Ascending aorta (tissue), 2 donors: ENCODE measurements at regions of chr19 and their contacts with region 1.

Region 1: DNA sequence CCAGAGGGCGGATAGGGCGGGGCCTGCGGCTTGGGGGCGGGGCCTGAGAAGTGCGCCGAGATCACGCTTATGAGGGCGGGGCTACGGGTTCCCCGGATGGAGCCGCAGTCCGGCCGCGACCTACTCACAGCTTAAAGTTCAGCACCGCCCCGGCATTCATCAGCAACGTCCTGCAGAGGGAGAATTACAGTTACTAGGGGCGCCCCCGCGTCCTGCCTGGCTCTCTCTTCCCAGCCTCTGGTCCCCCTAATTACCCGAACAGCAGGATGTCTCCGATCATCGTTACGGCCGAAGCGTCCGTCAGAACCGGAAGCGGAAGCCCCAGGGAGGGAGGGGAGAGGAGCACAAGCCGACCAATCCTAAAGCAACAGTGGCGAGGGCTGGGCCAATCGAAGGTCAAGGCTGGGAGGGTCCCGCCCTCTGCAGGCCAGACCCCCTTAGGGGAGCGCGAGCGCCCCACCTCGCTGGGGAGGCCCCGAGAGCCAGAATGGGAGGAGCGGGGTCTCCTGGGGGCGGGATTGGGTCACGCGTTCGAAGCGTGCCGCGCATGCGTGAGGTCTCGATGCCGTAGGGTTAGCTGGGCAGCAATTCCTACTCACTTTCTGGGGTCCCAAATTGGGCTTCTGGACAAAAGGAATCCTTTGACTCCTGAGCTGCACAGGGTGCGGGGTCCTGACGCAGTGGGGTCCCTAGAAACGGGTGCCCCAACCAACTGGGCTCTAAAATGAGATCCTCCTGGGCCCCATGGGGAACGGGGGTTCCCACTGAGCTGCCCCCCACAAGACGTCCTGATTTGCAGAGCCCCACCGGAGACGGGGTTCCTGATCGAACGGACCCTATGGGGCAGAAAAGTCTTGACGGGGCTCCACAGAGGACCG is at the start of gene SMIM7:
- DNase-seq: peak; percentile 93 to 99
- H3K4me3 ChIP-seq: peak within 1 kb of the TSS; percentile 81 to 93
- H3K27ac ChIP-seq: peak within 1 kb of the TSS; percentile 87
- H3K4me1 ChIP-seq: peaks cover 9 to 20% of the 10 kb centered on the region in 2 donors
- H3K27me3 ChIP-seq: no peaks in the 10 kb centered on the region
- CTCF ChIP-seq: no peak
- total RNA-seq, gene SMIM7: 16.7 TPM

Region 2: DNA sequence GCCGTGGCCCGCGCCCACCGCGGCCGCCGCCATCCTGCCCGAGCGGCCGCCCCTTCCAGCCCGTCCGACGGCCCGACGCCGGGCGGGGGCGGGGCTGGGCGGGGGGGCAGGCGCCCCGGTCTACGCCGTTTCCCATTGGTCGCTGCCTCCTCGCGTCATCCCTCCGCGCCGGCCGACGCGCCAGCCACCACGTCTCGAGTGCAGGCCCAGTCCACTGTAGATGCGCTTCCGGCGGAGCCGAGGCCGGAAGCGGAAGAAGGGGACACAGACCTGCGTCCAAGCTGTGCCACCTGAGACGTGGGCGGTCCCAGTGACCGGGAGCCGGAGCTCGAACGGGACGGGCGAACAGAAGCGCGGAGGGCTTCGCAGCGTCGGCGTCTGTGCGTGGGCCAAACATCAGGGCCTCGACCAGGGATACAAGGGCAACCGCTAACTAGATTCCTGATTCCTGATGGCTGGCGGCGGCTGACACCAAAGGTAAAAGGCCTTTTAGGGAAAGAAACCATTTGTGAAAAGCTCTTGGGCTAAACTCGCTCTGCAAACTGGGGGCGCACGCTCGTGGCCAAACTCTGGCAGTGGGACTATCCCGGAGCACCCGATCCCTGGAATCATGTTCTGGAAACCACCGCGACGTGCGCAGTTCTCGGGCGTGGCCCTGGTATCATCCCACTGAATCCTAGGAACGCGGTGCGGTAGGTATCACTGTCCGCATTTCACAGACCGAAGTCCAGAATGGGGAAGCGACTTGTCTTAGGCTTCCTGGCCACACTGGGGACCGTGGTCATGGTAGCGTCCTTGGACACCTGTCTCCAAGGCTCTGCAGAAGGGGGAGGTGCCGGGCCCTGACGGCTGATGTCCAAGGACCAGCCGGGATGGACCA is 87.5 kb before region 1 on chr19 and contains the start of gene SLC35E1:
- intact Hi-C with region 1: loop called (anchors 5 kb)
- DNase-seq: peak; percentile 86 to 97
- H3K4me3 ChIP-seq: peak within 1 kb of the TSS; percentile 90 to 95
- H3K27ac ChIP-seq: peak within 1 kb of the TSS; percentile 73 to 86
- H3K4me1 ChIP-seq: peaks cover 14 to 23% of the 10 kb centered on the region in 2 donors
- H3K27me3 ChIP-seq: no peaks in the 10 kb centered on the region
- CTCF ChIP-seq: no peak
- total RNA-seq, gene SLC35E1: 56.3 TPM

Region 3: DNA sequence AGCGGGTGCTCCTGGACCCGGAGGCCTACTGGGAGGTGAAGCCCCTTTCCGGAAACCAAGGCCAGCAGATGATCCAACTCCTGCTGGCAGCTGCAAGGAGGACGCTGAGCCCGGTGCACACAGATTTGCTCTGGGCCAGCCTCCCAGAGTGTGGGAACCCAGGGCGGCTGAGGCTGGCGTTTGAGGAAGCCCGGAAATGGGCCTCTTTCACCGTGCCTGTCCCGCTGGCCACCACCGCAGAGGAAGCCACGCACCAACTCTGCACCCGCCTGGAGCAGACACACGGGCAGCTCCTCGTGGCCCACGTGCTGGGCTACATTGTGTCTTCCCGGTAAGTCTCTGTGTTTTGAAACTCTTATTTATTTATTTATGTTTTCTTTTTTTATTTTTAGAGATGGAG is 90.0 kb after region 1 on chr19:
- intact Hi-C with region 1: no loop called
- DNase-seq: no peak
- H3K4me3 ChIP-seq: no peak overlapping the region
- H3K27ac ChIP-seq: no peak overlapping the region
- H3K4me1 ChIP-seq: no peaks in the 10 kb centered on the region
- H3K27me3 ChIP-seq: no peaks in the 10 kb centered on the region
- CTCF ChIP-seq: no peak

Region 4: DNA sequence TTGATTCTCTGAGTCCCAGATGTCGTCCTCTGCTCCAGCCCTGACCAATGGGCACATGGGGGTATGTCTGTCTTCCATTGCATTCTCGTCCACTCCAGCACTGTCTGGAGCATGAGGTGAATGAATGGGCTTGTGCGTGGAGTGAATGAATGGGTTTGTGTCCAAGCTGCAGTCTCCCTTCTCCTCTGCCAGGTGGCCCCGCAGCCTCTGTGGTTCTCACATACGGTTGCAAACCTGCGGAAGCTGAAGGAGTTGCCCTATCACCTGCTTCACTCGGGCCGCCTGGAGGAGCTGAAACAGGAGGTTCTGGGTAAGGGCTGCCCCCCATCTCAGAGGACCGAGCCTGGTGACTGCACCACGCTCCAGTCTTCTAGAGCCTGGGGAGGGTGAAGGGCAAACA is 103.6 kb after region 1 on chr19:
- intact Hi-C with region 1: no loop called
- DNase-seq: no peak
- H3K4me3 ChIP-seq: no peak overlapping the region
- H3K27ac ChIP-seq: no peak overlapping the region
- H3K4me1 ChIP-seq: no peaks in the 10 kb centered on the region
- H3K27me3 ChIP-seq: no peaks in the 10 kb centered on the region
- CTCF ChIP-seq: no peak

Region 5: DNA sequence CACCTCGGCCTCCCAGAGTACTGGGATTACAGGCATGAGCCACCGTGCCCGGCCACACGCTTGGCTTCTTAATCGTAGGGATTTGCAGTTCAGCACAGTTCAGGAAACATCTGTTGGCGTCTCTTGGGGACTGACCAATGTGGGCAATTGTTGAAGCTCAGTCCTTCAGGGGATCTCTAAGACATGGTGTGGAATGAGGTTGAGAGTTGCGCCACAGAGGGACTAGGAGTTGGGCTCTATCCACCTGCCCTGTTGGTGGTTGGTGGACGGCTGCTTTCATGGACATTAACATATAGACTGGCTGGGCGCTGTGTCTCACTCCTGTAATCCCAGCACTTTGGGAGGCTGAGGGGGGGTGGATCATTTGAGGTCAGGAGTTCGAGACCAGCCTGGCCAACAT is 131.9 kb after region 1 on chr19:
- intact Hi-C with region 1: no loop called
- DNase-seq: no peak
- H3K4me3 ChIP-seq: no peak overlapping the region
- H3K27ac ChIP-seq: no peak overlapping the region
- H3K4me1 ChIP-seq: no peaks in the 10 kb centered on the region
- H3K27me3 ChIP-seq: no peaks in the 10 kb centered on the region
- CTCF ChIP-seq: no peak